Activated CD4-positive, alpha-beta T cell treated with anti-CD3 and anti-CD28 coated beads for 36 hours (primary cell): ENCODE measurements at regions of chr17 and their contacts with region 1.

Region 1: GRCh38 chr17:2711601-2712299 is at the start of gene CLUH:
- DNase-seq: peak; percentile 98
- ATAC-seq: peak; percentile 95
- H3K4me3 Mint-ChIP-seq: peak within 1 kb of the TSS; percentile 86
- H3K27ac Mint-ChIP-seq: peak within 1 kb of the TSS; percentile 84
- H3K4me1 Mint-ChIP-seq: peaks cover 35% of the 10 kb centered on the region
- H3K27me3 Mint-ChIP-seq: no peaks in the 10 kb centered on the region
- total RNA-seq, gene CLUH: 107 to 123 TPM

Region 2: DNA sequence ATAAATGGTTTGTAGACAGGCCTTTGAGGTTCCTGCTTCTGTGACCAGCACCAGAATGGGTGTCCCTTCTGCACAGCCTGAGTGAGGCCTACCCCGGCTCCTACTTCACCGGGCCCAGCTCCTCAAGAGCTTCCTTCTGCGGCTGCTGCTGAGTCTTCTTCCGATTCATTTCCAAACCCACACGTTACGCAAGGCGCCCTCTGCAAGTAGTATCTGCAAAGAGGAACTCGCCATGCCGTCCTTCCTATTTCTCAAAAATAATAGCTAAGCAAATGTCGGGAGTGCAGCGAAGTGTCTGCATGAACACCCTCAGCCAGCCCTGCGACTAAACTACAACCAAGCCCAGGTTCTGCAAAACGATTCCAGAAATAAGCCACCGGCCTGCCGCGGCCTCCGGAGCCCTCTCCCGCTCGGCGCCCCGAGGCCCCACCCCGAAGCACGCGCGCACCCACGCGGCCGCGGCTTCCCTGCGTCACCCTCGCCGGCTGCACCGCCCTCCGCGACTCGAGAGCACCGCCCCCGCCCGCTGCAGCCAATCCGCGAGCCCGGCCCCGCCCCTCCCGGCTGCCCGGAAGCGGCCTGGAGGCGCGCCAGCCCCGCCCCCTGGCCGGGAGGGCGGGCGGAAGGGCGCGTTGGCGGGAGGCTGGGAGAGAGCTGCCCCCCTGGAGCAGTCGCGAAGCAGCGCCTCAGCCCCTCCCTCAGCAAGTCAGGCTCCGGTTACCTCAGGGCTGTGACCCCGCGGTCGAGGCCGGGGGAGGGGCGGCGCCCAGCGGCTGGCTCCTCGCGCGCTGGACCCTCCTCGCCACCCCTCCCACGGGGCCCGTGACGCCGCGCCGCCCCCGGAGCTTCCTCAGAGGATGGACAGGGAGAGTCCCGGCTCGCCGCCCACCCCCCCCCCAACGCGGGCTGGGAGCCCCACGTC is 319.2 kb before region 1 on chr17:
- CTCF ChIA-PET with region 1: no interaction called
- POLR2A ChIA-PET with region 1: no interaction called
- intact Hi-C with region 1: loop called in 1 of 2 experiments (anchors 1 kb)
- DNase-seq: peak; percentile 99
- ATAC-seq: peak; percentile 72
- H3K4me3 Mint-ChIP-seq: peak overlapping the region; percentile 80
- H3K27ac Mint-ChIP-seq: peak overlapping the region; percentile 94
- H3K4me1 Mint-ChIP-seq: peaks cover 52% of the 10 kb centered on the region
- H3K27me3 Mint-ChIP-seq: no peaks in the 10 kb centered on the region

Region 3: DNA sequence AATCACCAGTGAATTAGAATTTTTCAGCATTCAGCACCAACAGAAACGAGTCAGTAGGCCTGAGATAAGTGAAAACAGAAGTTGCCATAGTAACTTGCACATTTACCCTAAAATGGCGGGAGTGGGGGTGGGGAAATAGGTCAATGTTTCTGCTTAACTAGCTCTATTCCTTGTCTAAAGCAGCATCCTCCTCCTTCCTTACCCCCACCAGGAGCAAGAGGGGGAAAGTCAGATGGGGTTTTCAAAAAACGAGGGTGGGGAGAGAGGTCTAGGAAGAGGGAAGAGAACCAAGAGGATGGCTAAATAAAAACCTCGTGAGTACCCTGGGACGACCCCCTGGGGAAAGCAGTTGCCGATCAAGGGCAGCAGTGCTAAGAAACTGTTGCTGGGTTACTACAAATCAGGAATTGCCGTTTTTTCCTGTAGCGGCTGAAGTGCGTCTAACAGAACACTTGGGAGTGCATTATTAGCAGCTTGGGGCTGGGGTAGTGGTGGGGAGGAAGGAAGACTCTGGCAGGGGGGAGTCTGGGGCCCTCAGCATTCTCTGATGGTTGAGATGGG is 276.5 kb before region 1 on chr17:
- CTCF ChIA-PET with region 1: no interaction called
- POLR2A ChIA-PET with region 1: no interaction called
- intact Hi-C with region 1: no loop called
- DNase-seq: no peak
- ATAC-seq: no peak
- H3K4me3 Mint-ChIP-seq: no peak overlapping the region
- H3K27ac Mint-ChIP-seq: no peak overlapping the region
- H3K4me1 Mint-ChIP-seq: peaks cover 8% of the 10 kb centered on the region
- H3K27me3 Mint-ChIP-seq: no peaks in the 10 kb centered on the region

Region 4: GRCh38 chr17:2511462-2512369 is 200.0 kb before region 1 on chr17 and contains the start of gene METTL16:
- CTCF ChIA-PET with region 1: interaction called, 3 read pairs
- POLR2A ChIA-PET with region 1: interaction called, 3 read pairs
- intact Hi-C with region 1: loop called in 1 of 2 experiments (anchors 1 kb)
- DNase-seq: peak; percentile 100
- ATAC-seq: peak; percentile 99
- H3K4me3 Mint-ChIP-seq: no peak within 1 kb of the TSS
- H3K27ac Mint-ChIP-seq: no peak within 1 kb of the TSS
- H3K4me1 Mint-ChIP-seq: peaks cover 17% of the 10 kb centered on the region
- H3K27me3 Mint-ChIP-seq: no peaks in the 10 kb centered on the region
- total RNA-seq, gene METTL16: 50.1 to 61.6 TPM

Region 5: DNA sequence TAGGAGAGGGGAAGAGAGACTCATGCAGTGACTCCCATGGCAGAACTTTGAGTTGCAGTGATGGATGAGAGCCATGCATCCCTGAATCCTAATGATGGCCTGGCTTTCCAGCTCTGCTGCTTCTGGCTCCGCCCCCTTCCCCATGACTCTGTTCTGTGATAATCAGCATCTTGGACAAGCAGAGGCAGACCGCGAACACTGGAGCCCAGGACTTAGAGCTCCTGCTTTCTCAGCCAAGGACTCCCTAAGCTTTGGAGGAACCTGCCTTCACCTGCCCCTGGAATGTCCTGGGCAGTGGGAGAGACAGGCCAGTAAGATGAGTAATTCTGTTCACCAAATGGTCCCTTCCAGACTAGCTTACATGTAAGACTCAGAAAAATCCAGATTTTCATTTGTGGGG is 25.2 kb after region 1 on chr17:
- CTCF ChIA-PET with region 1: no interaction called
- POLR2A ChIA-PET with region 1: no interaction called
- intact Hi-C with region 1: no loop called
- DNase-seq: no peak
- ATAC-seq: no peak
- H3K4me3 Mint-ChIP-seq: no peak overlapping the region
- H3K27ac Mint-ChIP-seq: no peak overlapping the region
- H3K4me1 Mint-ChIP-seq: no peaks in the 10 kb centered on the region
- H3K27me3 Mint-ChIP-seq: peaks cover 9% of the 10 kb centered on the region

Region 6: GRCh38 chr17:2786176-2786881 is 74.6 kb after region 1 on chr17:
- CTCF ChIA-PET with region 1: no interaction called
- POLR2A ChIA-PET with region 1: no interaction called
- intact Hi-C with region 1: loop called in 1 of 2 experiments (anchors 1 kb)
- DNase-seq: peak; percentile 96
- ATAC-seq: peak; percentile 100
- H3K4me3 Mint-ChIP-seq: no peak overlapping the region
- H3K27ac Mint-ChIP-seq: peak overlapping the region; percentile 31
- H3K4me1 Mint-ChIP-seq: peaks cover 3% of the 10 kb centered on the region
- H3K27me3 Mint-ChIP-seq: peaks cover 7% of the 10 kb centered on the region

Region 7: DNA sequence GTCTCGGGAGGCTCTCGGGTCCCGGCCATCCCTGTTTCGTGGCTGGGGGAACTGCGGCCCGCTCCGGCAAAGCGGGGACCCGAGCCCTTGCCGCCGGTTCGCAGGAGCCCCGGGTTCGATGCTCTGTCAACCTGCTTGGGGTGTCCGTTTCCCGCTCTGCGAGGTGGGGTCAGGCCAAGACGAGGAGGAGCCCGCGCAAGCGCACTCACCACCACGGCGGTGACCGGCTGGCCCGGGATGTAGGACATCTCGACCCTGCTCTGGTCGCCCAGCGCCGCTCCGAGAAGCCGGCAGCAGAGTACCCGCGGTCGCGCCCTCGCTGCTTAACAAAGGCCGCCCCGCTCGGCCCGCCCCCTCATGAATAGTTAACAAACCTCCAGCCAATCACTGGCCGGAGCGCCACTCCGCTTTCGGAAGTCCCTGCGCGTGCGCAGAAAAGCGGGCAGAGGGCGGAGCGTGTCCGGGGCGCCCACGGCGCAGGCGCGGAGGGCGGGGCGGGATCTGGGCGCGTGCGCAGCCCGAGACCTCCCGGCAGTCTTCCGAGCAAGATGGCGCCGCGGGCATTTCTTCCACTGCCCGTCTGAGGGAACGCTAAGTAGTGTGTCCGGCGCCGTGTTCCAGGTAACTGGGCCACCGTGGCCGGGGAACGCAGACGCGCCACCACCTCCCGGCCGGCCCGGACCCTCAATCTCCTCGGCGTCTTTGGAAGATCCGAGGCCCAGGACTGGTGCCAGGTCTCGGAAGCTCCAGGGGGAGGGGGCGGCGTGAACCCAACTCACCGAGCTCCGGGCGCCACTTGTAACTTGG is 956.7 kb after region 1 on chr17 and contains the starts of genes EMC6 and TAX1BP3:
- CTCF ChIA-PET with region 1: no interaction called
- POLR2A ChIA-PET with region 1: no interaction called
- intact Hi-C with region 1: loop called in 1 of 2 experiments (anchors 1 kb)
- DNase-seq: peak; percentile 99
- ATAC-seq: peak; percentile 94
- H3K4me3 Mint-ChIP-seq: peak within 1 kb of the TSS; percentile 97
- H3K27ac Mint-ChIP-seq: peak within 1 kb of the TSS; percentile 94
- H3K4me1 Mint-ChIP-seq: peaks cover 21% of the 10 kb centered on the region
- H3K27me3 Mint-ChIP-seq: no peaks in the 10 kb centered on the region
- total RNA-seq, gene EMC6: 43.6 to 44.3 TPM
- total RNA-seq, gene TAX1BP3: 12.0 to 14.6 TPM